ENCODE measurements at regions of chr7 and their contacts with region 1.

Region 1: DNA sequence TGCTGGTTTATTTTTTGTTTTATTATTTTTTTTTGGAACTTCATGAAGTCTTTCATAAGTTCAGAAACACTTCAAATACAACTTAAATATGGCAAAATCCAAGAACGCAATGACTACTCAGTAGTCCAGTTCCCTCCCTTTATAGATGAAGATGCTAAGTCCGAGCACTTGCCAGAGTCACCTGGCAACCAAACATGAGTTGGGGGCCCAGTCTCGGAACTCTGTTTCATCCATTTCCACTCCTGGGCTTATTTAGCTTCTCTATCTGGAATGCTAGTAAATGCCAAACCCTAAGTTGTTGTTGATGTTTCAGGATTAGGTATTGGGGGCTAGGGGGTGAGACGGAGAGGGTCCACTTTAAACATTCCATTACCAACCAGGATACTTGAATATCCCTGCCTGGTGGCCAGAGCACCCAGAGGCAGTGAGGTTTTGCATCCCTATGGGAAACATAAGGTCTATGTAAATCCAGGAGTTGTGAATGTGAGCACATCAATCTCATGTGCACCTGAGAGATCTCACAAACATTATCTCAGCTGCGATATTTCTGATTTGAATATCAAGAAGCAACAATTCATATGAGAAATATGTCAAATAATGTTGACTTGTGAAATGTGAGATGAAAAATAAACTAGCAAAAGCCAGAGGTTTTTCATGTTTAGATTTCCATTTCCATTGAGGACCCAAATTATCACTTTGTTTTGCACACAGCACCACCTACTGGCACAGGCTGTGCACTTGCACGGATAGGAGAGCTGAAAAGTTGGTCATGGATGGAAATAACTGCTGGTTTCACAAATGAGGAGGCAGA is 129.3 kb downstream of the PKD1L1 start:
- DNase-seq: peak; percentile 46
- H3K4me3 ChIP-seq: no peak overlapping the region
- H3K27ac ChIP-seq: no peak overlapping the region
- H3K4me1 ChIP-seq: no peaks in the 10 kb centered on the region
- H3K27me3 ChIP-seq: no peaks in the 10 kb centered on the region
- CTCF ChIP-seq: peak; percentile 94 to 100

Region 2: GRCh38 chr7:47435889-47436312 is 383.1 kb before region 1 on chr7:
- CTCF ChIA-PET with region 1: interaction called, 6 read pairs
- dilution Hi-C with region 1: no loop called
- in situ Hi-C with region 1: loop called in 1 of 2 experiments (anchors 10 kb)
- intact Hi-C with region 1: loop called (anchors 1 kb)
- DNase-seq: peak; percentile 56
- H3K4me3 ChIP-seq: no peak overlapping the region
- H3K27ac ChIP-seq: no peak overlapping the region
- H3K4me1 ChIP-seq: no peaks in the 10 kb centered on the region
- H3K27me3 ChIP-seq: no peaks in the 10 kb centered on the region
- CTCF ChIP-seq: peak; percentile 70 to 73

Region 3: GRCh38 chr7:47571331-47572093 is 247.5 kb before region 1 on chr7:
- CTCF ChIA-PET with region 1: no interaction called
- dilution Hi-C with region 1: no loop called
- in situ Hi-C with region 1: loop called in 1 of 2 experiments (anchors 25 kb)
- intact Hi-C with region 1: loop called (anchors 5 kb)
- DNase-seq: peak; percentile 61
- H3K4me3 ChIP-seq: peak overlapping the region in 1 of 3 experiments; percentile 23
- H3K27ac ChIP-seq: no peak overlapping the region
- H3K4me1 ChIP-seq: peaks cover 47% of the 10 kb centered on the region
- H3K27me3 ChIP-seq: no peaks in the 10 kb centered on the region
- CTCF ChIP-seq: peak in 1 of 2 donors; percentile 5

Region 4: GRCh38 chr7:47714669-47715607 is 104.1 kb before region 1 on chr7:
- CTCF ChIA-PET with region 1: no interaction called
- dilution Hi-C with region 1: loop called (anchors 5 kb)
- in situ Hi-C with region 1: no loop called
- intact Hi-C with region 1: loop called (anchors 10 kb)
- DNase-seq: no peak
- H3K4me3 ChIP-seq: no peak overlapping the region
- H3K27ac ChIP-seq: no peak overlapping the region
- H3K4me1 ChIP-seq: no peaks in the 10 kb centered on the region
- H3K27me3 ChIP-seq: no peaks in the 10 kb centered on the region
- CTCF ChIP-seq: no peak

Region 5: GRCh38 chr7:47757921-47758411 is 61.0 kb before region 1 on chr7:
- CTCF ChIA-PET with region 1: no interaction called
- dilution Hi-C with region 1: no loop called
- in situ Hi-C with region 1: no loop called
- intact Hi-C with region 1: loop called (anchors 1 kb)
- DNase-seq: peak; percentile 67
- H3K4me3 ChIP-seq: no peak overlapping the region
- H3K27ac ChIP-seq: peak overlapping the region; percentile 94
- H3K4me1 ChIP-seq: peaks cover 29% of the 10 kb centered on the region
- H3K27me3 ChIP-seq: no peaks in the 10 kb centered on the region
- CTCF ChIP-seq: no peak

Measured in mammary epithelial cell (primary cell).